ENCODE measurements at regions of chr1 and their contacts with region 1.

Region 1: DNA sequence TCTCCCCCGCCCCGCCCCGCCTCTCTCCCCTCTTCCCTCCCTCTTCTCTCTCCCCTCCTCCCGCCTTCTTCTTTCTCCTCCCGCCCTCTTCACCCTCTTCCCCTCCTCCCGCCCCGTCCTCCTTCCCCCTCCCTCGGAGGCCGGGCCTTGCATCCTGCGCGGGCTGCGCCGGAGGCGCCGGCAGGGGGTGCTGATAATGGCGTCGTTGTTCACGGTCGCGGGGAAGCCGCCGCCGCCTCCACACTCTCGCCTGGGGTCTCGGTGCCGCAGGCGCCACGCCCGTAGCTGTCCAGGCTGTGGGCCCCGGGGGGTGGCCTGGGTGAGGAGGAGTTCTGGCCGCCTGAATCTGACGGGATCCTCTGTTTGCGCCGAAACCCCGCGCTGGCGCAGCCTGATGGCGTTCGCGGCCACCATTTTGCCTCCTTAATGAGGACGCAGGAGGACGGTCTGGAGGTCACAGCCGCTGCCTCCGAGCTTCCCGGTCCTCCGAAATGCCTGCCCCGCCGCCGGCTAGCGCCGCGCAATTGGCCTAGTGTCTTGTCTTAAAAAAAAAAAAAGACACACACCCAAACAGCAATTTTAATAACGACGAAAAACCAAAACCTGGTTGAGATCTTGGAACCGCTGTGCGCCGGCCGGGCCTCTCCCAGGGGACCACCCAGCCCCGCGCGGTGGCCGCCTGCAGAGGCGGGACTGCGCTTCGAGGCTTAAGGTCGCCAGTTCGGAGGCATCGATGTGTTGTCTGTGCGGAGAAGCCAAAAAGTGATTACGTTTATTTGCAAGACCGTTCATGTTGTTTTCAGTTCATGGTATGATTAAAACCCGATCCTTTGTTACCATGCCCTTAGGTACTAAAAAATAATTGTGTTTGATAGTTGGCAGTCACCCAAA is 106.6 kb upstream of the HNRNPU start:
- DNase-seq: peak; percentile 88 to 99 (median 92)

Region 2: DNA sequence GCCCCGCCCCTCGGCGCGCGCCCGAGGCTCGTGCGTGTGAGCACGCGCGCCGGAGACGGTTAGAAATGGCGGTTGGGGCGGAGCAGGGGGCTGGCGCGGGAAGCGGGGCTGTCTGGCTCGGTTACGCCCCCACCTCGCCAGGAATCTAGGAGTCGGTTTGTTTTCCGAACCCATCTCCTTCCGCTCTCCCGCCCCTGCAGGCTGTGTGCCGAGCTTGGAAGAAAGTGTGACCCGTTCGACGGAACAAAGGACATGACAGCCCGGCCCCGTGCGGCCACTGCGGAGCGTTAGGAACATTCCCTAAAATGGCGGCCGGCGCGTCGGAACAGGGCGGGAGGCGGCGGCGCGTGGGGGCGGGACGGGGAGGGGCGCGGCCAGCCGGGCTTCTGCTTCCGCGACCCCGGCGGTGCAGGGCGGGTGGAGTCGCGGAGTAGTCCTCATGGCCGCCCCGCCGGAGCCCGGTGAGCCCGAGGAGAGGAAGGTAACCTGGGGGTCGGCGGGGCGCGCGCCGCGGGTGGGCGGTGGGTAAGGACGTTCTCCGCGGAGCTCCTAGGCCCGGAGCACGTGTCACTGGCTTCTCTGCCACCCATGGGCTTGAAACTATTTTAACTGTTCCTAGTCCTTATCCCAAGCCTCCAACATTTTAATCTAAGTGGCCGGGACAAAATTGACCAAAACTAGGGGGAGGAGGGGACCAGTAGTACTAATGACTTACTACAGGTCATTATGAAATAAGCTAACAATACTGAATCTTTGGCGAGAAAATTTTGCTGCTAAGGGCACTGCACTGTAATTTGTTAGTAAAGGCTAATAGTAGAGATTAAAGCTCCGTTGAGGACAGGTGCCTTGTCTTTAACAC is 135.4 kb before region 1 on chr1 and contains the start of gene COX20:
- intact Hi-C with region 1: loop called (anchors 1 kb)
- DNase-seq: peak; percentile 78 to 96 (median 84)

Region 3: DNA sequence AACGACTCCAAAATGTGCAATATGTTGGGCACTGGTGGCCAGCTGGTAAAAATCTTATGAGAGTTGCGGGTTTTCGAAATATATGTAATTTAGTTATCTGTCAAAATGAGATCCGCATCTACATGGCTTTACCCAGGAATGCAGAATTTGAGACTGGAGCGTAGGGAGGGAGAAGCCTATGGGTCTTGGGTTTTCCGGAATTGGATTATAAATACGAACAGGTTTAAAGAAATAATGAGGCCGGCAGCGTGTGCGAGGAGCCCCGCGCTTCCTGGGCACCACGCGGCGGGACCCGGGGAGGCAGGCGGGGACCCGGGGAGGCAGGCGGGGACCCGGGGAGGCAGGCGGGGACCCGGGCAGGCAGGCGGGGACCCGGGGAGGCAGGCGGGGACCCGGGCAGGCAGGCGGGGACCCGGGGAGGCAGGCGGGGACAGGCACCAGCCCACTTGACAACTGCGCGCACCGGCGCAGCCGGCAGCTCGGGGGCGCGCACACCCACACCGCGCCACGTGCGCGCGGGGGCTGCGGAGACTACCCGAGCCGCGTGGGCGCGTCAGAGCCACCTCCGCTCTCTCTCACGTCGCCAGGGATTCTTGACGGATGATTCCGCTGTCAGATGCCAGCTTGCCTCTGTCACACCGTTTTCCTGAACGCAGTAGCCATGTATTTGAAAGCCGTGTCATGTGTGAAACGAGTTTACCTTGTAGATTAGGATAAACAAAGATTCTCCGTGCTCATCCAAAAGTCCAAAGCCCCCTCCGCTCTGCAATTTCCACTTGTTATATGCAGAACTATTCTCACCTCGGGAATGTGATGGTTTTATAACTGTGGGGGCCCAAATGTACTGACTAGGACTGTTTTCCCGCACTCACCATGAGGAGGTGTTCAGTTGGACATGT is 52.2 kb before region 1 on chr1:
- intact Hi-C with region 1: loop called (anchors 5 kb)
- DNase-seq: peak; percentile 14 to 94 (median 49)